ENCODE measurements at regions of chr2 and their contacts with region 1.

Region 1: GRCh38 chr2:212595037-212595654 is 56.5 kb upstream of the ERBB4 start:
- DNase-seq: peak; percentile 46
- H3K4me3 ChIP-seq: no peak overlapping the region
- H3K27ac ChIP-seq: no peak overlapping the region
- H3K4me1 ChIP-seq: peaks cover 15% of the 10 kb centered on the region
- H3K27me3 ChIP-seq: no peaks in the 10 kb centered on the region
- CTCF ChIP-seq: peak; percentile 57 to 61

Region 2: GRCh38 chr2:212580117-212580516 is 15.0 kb before region 1 on chr2:
- CTCF ChIA-PET with region 1: no interaction called
- dilution Hi-C with region 1: no loop called
- in situ Hi-C with region 1: no loop called
- intact Hi-C with region 1: no loop called
- DNase-seq: no peak
- H3K4me3 ChIP-seq: no peak overlapping the region
- H3K27ac ChIP-seq: no peak overlapping the region
- H3K4me1 ChIP-seq: no peaks in the 10 kb centered on the region
- H3K27me3 ChIP-seq: no peaks in the 10 kb centered on the region
- CTCF ChIP-seq: no peak

Region 3: DNA sequence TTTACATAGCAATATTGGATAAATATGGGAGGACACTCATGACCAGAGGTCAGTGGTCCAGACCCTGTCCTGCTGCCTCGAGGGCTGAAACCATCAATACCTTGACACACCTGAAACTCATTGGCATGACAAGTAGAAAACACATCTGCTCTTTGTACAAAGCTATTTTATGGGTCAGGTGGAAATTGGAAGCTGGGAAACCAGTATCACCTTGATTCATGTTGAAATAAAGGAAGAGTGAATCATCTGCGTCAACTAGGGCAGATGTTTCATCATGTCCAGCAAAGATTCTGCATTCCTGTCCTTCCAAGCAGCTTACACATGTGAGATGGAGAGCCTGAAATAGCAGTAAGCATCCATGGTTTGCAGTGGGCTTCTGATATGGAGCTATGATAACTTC is 23.5 kb after region 1 on chr2:
- CTCF ChIA-PET with region 1: no interaction called
- dilution Hi-C with region 1: no loop called
- in situ Hi-C with region 1: no loop called
- intact Hi-C with region 1: loop called (anchors 2 kb)
- DNase-seq: peak; percentile 95
- H3K4me3 ChIP-seq: no peak overlapping the region
- H3K27ac ChIP-seq: peak overlapping the region; percentile 95
- H3K4me1 ChIP-seq: peaks cover 32% of the 10 kb centered on the region
- H3K27me3 ChIP-seq: no peaks in the 10 kb centered on the region
- CTCF ChIP-seq: no peak

Region 4: DNA sequence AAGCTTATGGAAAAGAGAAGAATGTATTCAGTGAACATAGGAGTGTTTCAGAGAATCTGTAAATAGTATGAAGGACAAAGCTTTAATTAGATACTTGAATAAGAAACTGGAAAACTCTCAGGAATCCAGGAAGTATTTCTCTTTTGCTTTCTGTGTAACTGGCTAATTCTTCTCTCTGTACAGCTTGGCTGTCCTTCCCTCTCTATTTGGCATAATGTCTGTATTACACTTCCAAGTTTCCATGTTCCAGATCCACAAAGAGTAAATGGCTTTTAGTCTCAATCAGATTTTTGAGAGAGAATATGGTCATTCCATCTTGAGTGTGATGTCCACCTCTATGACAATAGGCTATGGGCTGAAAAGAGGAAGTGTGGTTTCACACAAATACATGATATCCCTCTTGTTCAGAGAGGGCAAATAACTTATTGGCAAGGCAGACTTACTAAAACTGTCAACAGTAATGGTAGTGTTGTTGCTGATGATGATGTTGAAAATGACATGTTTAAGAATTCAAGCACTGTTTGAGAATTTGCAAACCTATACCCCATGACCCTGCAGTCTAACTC is 72.7 kb after region 1 on chr2:
- CTCF ChIA-PET with region 1: no interaction called
- dilution Hi-C with region 1: no loop called
- in situ Hi-C with region 1: no loop called
- intact Hi-C with region 1: loop called (anchors 1 kb)
- DNase-seq: no peak
- H3K4me3 ChIP-seq: no peak overlapping the region
- H3K27ac ChIP-seq: no peak overlapping the region
- H3K4me1 ChIP-seq: no peaks in the 10 kb centered on the region
- H3K27me3 ChIP-seq: no peaks in the 10 kb centered on the region
- CTCF ChIP-seq: no peak

Region 5: DNA sequence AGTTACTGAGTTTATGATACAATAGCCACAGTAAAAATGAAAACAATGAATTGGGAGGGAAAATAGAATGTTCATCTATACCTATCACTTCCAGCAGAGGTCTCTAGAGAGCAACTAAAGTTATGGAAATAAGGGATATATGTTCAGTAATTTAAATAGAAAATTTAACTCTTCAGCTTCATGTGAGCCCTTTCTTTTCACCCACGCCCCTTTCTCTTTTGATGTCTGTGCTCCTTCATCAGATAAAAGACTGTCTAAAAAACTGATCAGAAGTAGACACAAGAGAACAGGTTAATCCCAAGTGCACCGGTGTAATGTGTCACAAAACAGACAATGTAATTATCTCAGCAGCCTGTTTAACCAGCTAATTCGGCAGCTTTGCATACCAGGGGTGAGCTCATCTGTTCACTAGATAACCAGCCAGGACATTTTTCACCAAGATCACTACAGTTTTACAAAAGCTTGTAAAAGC is 181.9 kb after region 1 on chr2:
- CTCF ChIA-PET with region 1: no interaction called
- dilution Hi-C with region 1: no loop called
- in situ Hi-C with region 1: no loop called
- intact Hi-C with region 1: loop called (anchors 2 kb)
- DNase-seq: peak; percentile 52
- H3K4me3 ChIP-seq: no peak overlapping the region
- H3K27ac ChIP-seq: no peak overlapping the region
- H3K4me1 ChIP-seq: peaks cover 7% of the 10 kb centered on the region
- H3K27me3 ChIP-seq: no peaks in the 10 kb centered on the region
- CTCF ChIP-seq: peak; percentile 60 to 69

Region 6: DNA sequence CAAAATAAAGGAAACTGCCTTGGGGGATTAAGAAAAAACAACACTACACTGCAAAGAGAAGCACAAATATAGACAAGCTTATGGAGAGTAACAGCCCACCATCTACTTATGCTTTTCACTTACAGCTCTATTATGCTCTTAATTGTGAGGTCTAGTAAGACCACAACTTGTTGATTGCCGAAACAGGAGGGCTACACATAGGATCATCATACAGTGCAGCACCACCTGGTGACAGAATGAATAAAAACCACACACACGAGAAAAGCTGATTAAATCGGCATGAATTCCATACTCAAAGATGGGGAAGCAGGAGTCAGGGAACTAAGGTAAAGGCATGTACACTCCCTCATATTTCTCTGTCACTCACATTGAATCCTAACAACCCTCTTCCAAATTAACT is 297.0 kb after region 1 on chr2:
- CTCF ChIA-PET with region 1: no interaction called
- dilution Hi-C with region 1: no loop called
- in situ Hi-C with region 1: no loop called
- intact Hi-C with region 1: loop called (anchors 2 kb)
- DNase-seq: peak; percentile 59
- H3K4me3 ChIP-seq: no peak overlapping the region
- H3K27ac ChIP-seq: no peak overlapping the region
- H3K4me1 ChIP-seq: peaks cover 5% of the 10 kb centered on the region
- H3K27me3 ChIP-seq: no peaks in the 10 kb centered on the region
- CTCF ChIP-seq: peak; percentile 56 to 69

Region 7: DNA sequence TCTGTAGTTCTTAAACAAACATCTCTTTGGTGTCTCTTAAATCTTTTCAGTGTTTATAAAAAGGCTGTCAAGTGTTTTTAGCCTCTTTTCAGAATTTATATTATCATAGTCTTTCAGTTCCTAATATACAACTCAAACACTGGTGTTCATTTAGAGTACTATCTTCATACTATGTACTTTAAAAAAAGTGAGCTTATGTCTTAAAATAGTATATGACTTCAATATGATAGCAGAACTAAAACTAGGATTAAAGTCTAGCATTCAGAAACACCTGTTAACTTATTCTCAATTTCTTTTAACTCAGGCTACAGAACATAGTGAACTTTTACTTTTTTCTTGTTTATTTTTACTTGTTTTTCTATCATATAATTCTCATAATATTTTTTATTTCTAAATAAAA is 571.0 kb after region 1 on chr2:
- CTCF ChIA-PET with region 1: no interaction called
- dilution Hi-C with region 1: no loop called
- in situ Hi-C with region 1: loop called in 1 of 2 experiments (anchors 10 kb)
- intact Hi-C with region 1: no loop called
- DNase-seq: no peak
- H3K4me3 ChIP-seq: no peak overlapping the region
- H3K27ac ChIP-seq: no peak overlapping the region
- H3K4me1 ChIP-seq: peaks cover 12% of the 10 kb centered on the region
- H3K27me3 ChIP-seq: no peaks in the 10 kb centered on the region
- CTCF ChIP-seq: no peak

Measured in mammary epithelial cell (primary cell).